Caco-2 (cell line): ENCODE measurements at regions of chr1 and their contacts with region 1.

Region 1: DNA sequence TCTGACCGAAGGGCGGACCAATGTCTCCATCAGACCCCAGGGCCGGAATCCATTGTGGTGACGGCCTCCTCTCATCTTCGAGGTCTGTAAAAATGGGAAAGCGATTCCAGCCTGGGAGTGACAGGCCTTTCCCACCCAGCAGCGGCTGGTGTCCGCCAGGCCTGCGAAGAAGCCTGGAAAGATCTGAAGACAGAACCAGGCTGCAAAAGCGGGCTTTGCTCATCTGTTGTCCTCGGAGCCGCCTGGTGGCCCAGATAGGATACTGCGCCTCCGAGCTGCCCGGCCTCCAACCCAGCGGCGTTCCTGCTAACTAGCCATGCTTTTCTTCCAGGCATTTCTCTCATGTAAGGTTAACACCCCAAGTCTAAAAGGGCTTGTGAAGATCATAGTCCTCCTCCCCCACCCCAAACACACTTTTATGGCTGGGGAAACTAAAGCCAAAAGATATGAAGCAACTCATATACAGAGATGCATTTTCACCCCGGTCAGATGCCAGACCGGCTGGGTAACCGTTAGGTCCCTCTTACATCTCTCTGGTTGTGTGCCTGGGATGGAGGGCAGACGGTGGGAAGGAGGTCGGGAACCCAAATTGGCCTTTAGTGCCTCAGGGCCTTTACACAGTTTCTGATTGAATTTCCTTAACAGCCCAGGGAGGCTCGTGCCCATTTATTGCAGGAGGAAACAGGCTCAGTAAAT is 1.9 kb upstream of the DHRS3 start:
- DNase-seq: peak; percentile 83 to 87
- H3K4me3 ChIP-seq: peak overlapping the region; percentile 89
- H3K4me3 Mint-ChIP-seq: peak overlapping the region; percentile 93
- H3K27ac Mint-ChIP-seq: peak overlapping the region; percentile 96
- H3K4me1 ChIP-seq: peaks cover 4% of the 10 kb centered on the region; the same call in 1 of the 2 replicates
- H3K4me1 Mint-ChIP-seq: peaks cover 2% of the 10 kb centered on the region
- H3K27me3 ChIP-seq: no peaks in the 10 kb centered on the region
- H3K27me3 Mint-ChIP-seq: no peaks in the 10 kb centered on the region
- CTCF ChIP-seq: peak; percentile 86 to 94

Region 2: GRCh38 chr1:12314333-12314903 is 305.5 kb before region 1 on chr1:
- CTCF ChIA-PET with region 1: interaction called, 6 read pairs
- POLR2A ChIA-PET with region 1: no interaction called
- intact Hi-C with region 1: loop called (anchors 1 kb)
- DNase-seq: no peak
- H3K4me3 ChIP-seq: no peak overlapping the region
- H3K4me3 Mint-ChIP-seq: no peak overlapping the region
- H3K27ac Mint-ChIP-seq: no peak overlapping the region
- H3K4me1 ChIP-seq: 0 out of 2 replicates have a peak, but pooled peaks cover 7% of the 10 kb centered on the region
- H3K4me1 Mint-ChIP-seq: no peaks in the 10 kb centered on the region
- H3K27me3 ChIP-seq: no peaks in the 10 kb centered on the region
- H3K27me3 Mint-ChIP-seq: no peaks in the 10 kb centered on the region
- CTCF ChIP-seq: peak; percentile 15 to 50

Region 3: DNA sequence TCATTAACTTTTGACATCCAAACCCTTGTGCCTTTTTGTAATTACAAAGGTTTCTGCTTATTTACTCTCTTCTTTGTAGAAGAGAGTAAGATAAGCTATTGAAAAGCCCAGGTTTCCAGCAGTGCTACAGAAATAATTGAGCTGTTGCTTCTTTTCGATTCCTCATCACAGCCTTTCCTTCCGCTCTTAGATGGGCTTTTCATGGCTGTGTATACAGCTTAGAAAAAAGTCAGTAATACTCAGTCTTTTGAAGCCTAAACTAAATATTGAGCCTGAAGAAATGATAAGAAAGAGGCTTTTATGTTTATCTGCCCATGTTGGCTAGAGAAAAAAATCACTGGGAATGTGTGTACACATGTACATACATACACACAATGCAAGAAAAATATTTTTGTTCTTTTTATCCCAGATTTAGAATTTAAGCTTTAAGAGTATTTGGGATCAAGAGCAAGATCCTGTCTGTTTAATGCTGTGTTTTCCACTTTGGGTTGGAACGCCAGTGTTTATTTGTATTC is 217.7 kb before region 1 on chr1:
- CTCF ChIA-PET with region 1: interaction called, 3 read pairs
- POLR2A ChIA-PET with region 1: interaction called, 3 read pairs
- intact Hi-C with region 1: loop called (anchors 1 kb)
- DNase-seq: peak in 1 of 2 experiments; percentile 39
- H3K4me3 ChIP-seq: no peak overlapping the region
- H3K4me3 Mint-ChIP-seq: no peak overlapping the region
- H3K27ac Mint-ChIP-seq: no peak overlapping the region
- H3K4me1 ChIP-seq: peaks cover 38% of the 10 kb centered on the region
- H3K4me1 Mint-ChIP-seq: peaks cover 6% of the 10 kb centered on the region
- H3K27me3 ChIP-seq: no peaks in the 10 kb centered on the region
- H3K27me3 Mint-ChIP-seq: no peaks in the 10 kb centered on the region
- CTCF ChIP-seq: no peak

Region 4: DNA sequence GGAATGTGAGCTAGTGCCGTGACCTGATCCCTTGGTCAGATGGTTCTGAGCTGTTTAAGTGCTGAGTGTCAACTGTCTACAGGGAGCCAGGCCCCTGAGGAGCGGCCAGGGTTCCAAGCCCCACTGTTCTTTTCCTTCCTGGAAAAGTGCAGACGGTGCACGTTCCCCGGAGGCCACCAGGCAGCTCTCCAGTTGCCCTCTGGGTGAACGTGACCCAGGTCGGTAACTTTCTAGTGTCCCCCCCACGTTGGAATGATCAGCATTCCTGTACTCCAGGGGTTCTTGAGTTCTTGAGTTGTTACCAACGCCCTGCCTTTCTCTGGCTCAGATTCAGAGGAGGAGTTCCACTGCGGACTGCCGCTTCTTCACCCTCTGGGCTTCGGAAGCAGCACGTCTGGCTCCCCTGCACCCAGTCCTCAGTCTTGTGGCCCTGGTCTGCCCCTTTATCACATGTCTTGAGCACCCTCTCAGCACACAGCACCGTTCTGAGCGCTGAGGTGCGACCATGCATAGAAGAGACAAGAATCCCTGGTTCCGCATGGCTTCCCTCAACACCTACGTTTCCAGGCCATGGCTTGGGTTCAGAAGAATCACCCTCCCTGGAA is 133.4 kb before region 1 on chr1:
- CTCF ChIA-PET with region 1: no interaction called
- POLR2A ChIA-PET with region 1: no interaction called
- intact Hi-C with region 1: loop called (anchors 5 kb)
- DNase-seq: peak in 1 of 2 experiments; percentile 49
- H3K4me3 ChIP-seq: no peak overlapping the region
- H3K4me3 Mint-ChIP-seq: no peak overlapping the region
- H3K27ac Mint-ChIP-seq: peak overlapping the region; percentile 61
- H3K4me1 ChIP-seq: peaks cover 35% of the 10 kb centered on the region
- H3K4me1 Mint-ChIP-seq: peaks cover 28% of the 10 kb centered on the region
- H3K27me3 ChIP-seq: no peaks in the 10 kb centered on the region
- H3K27me3 Mint-ChIP-seq: no peaks in the 10 kb centered on the region
- CTCF ChIP-seq: no peak

Region 5: DNA sequence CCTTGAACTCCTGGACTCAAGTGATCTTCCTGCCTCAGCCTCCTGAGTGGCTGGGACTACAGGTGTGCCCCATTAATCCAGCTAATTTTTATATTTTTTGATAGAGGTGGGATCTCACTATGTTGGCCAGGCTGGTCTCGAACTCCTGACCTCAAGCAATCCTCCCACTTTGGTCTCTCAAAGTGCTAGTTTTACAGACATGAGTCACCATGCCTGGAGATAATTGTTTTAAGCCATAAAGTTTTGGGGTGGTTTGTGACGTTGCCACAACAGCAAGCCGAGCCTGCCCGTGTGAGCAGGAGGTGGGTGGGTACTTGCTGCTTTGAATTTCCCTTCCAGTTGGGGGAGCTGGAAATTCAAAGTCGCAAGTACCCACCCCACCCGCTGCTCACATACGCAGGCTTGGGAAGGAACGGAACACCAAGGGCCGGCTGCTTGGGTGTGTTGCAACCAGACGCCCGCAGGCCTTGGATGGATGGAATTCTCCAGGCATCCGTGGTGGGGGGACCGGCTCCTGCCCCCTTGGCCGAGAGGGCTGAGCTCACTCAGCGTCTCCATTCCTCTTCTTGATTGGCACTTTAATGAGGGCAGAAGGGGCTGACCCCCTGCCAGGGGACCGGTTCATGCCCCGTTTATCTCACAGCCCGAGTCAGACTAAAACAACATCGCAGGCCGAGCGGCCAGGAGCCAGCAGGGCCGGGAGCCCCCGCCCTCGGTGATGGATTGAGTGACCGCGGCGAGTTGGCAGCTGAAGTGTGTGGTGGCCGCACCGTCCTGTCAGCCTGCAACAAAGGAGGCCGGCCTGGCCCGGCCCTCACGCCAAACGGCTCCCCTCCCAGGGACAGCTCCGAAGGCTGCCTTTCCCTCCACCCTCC is 80.0 kb before region 1 on chr1:
- CTCF ChIA-PET with region 1: no interaction called
- POLR2A ChIA-PET with region 1: no interaction called
- intact Hi-C with region 1: no loop called
- DNase-seq: peak in 1 of 2 experiments; percentile 57
- H3K4me3 ChIP-seq: no peak overlapping the region
- H3K4me3 Mint-ChIP-seq: no peak overlapping the region
- H3K27ac Mint-ChIP-seq: no peak overlapping the region
- H3K4me1 ChIP-seq: no peaks in the 10 kb centered on the region
- H3K4me1 Mint-ChIP-seq: no peaks in the 10 kb centered on the region
- H3K27me3 ChIP-seq: no peaks in the 10 kb centered on the region
- H3K27me3 Mint-ChIP-seq: no peaks in the 10 kb centered on the region
- CTCF ChIP-seq: no peak

Region 6: DNA sequence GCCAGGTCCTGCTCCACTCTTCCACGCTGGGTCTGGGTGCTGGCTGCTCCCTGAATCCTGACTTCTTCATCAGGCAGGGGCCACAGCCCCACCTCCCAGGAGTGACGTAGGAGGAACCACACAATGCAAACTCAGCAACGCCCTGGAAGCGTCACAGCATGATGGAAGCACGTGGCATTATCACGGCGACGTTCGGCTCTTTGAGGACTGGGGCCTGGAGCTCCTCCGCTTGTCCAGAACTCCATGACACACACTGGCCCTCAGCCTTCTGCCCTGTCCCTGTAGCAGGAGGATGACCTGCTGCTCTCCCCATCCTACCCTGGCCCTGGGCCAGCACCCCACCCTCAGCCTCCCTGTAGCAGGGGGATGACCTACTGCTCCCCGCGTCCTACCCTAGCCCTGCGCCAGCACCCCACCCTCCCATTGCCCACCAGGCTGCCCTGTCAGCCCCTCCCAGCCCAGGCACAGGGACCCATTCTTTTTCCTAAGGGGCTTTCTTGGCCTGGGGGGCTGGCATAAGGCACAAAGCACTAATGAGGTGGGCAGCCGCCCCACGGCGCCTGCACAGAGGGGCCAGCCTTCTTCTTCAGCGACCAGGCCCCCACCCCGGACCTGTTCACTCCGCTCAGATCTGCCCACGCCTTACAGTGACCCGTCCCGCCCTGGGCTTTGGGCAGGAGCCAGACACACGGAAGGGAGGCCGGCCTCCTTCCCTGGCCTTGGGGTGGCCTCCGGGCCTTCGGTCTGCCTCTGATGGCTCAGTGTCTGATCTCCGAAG is 67.6 kb before region 1 on chr1:
- CTCF ChIA-PET with region 1: no interaction called
- POLR2A ChIA-PET with region 1: no interaction called
- intact Hi-C with region 1: no loop called
- DNase-seq: no peak
- H3K4me3 ChIP-seq: no peak overlapping the region
- H3K4me3 Mint-ChIP-seq: no peak overlapping the region
- H3K27ac Mint-ChIP-seq: no peak overlapping the region
- H3K4me1 ChIP-seq: peaks cover 18% of the 10 kb centered on the region
- H3K4me1 Mint-ChIP-seq: peaks cover 14% of the 10 kb centered on the region
- H3K27me3 ChIP-seq: no peaks in the 10 kb centered on the region
- H3K27me3 Mint-ChIP-seq: no peaks in the 10 kb centered on the region
- CTCF ChIP-seq: no peak

Region 7: DNA sequence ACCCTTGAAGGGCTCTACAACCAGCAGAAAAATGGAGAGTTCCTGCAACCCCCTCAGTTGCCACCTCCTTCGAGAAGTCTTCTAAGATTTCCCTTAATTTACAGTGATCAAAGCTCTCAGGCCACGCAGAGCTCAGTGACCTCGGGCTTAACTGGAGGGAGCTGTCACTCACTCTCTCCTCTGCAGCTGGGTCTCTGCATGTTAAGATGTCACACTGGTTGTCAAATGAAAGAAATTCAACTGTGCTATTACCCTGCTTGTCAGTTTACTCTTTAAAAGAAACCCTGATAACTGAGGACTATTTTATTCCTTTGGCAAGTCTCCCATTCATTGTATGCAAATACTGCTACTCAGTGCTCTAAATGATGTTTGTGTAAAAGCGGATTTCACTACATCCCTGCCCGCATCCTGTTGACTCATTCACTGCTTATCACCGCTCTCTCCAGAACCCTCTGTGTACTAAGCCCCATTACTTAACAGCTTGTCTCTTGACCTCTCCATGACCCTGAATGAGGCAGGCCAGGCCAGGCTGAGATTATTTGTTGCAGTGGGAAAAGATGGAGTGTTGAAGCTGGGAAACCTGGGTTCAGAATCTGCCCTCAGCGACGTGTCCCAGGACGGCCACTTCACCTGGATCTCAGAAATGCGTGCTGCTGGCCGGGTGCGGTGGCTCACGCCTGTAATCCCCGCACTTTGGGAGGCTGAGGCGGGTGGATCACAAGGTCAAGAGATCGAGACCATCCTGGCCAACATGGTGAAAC is 15.6 kb before region 1 on chr1:
- CTCF ChIA-PET with region 1: interaction called, 6 read pairs
- POLR2A ChIA-PET with region 1: interaction called, 4 read pairs
- intact Hi-C with region 1: loop called (anchors 1 kb)
- DNase-seq: peak; percentile 72 to 78
- H3K4me3 ChIP-seq: no peak overlapping the region
- H3K4me3 Mint-ChIP-seq: peak overlapping the region; percentile 37
- H3K27ac Mint-ChIP-seq: peak overlapping the region; percentile 59
- H3K4me1 ChIP-seq: peaks cover 52% of the 10 kb centered on the region
- H3K4me1 Mint-ChIP-seq: peaks cover 23% of the 10 kb centered on the region
- H3K27me3 ChIP-seq: no peaks in the 10 kb centered on the region
- H3K27me3 Mint-ChIP-seq: no peaks in the 10 kb centered on the region
- CTCF ChIP-seq: no peak